ENCODE measurements at regions of chr16 and their contacts with region 1.

Region 1: DNA sequence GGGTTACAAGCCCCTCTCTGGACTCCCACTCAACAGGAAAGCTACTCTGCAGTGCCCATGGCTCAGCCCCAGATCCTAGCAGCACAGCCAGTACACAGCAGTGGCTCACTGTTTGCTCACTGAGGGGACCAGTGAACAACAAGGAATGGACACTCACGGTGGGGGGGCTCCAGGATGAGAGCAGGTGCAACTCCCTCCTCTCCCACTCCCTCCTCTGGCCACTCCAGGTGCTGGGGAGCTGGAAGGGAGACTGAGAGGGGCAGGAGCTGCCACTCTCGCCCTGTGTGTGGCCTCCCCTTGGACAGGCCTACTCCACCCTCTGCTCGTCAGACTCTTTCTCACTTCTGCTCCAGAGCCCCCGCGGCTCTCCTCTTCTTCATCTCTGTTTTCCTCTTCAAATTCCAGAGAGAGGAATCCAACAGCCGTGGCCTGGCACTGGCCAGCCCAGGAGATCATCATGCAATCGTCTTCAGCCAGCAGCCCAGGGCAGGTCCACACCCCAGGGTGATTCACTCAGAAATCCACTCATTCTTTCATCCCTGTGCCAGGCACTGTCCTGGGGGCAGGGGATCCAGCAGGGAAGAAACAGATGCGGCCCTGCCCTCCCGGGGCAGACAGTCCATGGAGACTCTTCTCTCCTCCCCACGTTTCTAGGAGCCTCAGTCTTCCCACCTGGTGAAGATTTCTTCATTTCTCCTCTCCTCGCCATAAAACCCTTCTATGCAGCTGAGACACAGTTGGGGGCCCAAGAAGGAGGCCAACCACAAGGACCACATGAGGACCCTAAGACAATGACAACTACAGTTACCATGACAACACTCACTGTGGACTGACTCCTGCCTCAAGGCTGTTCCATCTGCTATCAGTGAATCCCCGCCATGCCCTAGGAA is 30.7 kb downstream of the CFAP20 start:
- DNase-seq: no peak
- CTCF ChIP-seq: no peak

Region 2: GRCh38 chr16:58063377-58064076 is 34.9 kb before region 1 on chr16:
- CTCF ChIA-PET with region 1: no interaction called
- POLR2A ChIA-PET with region 1: no interaction called
- DNase-seq: no peak
- CTCF ChIP-seq: no peak

Region 3: GRCh38 chr16:58110571-58111301 is 12.3 kb after region 1 on chr16:
- CTCF ChIA-PET with region 1: interaction called, 33 read pairs
- POLR2A ChIA-PET with region 1: no interaction called
- DNase-seq: no peak
- CTCF ChIP-seq: no peak